Adrenal gland (tissue), 19 donors: ENCODE measurements at regions of chr15 and their contacts with region 1.

Region 1: DNA sequence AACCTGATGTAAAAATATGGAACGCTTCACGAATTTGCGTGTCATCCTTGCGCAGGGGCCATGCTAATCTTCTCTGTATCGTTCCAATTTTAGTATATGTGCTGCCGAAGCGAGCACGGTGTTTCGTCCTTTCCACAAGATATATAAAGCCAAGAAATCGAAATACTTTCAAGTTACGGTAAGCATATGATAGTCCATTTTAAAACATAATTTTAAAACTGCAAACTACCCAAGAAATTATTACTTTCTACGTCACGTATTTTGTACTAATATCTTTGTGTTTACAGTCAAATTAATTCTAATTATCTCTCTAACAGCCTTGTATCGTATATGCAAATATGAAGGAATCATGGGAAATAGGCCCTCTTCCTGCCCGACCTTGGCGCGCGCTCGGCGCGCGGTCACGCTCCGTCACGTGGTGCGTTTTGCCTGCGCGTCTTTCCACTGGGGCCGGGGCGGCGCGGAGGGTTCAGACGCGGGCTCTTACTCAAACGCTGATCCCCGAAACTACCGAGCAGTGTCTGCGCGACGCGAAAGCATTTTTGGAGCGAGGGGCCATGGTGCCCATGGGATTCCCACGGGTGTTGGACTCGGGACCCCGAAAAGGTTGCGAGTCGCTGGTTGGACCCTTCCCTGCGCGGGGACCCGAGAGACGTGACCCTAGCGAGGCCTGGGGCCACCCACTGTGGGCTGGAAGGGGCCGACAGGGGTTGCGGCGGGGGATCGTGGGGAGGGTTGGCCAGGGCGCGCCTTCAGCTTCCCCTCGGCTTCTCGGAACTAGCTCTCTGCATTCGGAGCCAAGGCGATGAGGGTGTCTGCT is at the start of gene RNU6-1:
- DNase-seq: peak; percentile 92 to 98 (median 95)
- H3K4me3 ChIP-seq: peak within 1 kb of the TSS; percentile 46 to 89 (median 61)
- H3K27ac ChIP-seq: peak within 1 kb of the TSS; percentile 95 to 99 (median 96)
- H3K4me1 ChIP-seq: peaks cover 0 to 35% of the 10 kb centered on the region in 2 donors
- H3K27me3 ChIP-seq: peaks cover 5% of the 10 kb centered on the region
- CTCF ChIP-seq: no peak
- POLR2A ChIP-seq: peak; percentile 78 to 91
- total RNA-seq, gene RNU6-1: not detected

Region 2: GRCh38 chr15:66946578-66947164 is 893.5 kb before region 1 on chr15:
- intact Hi-C with region 1: loop called in 1 of 2 experiments (anchors 10 kb)
- DNase-seq: peak; percentile 49 to 87 (median 65)
- H3K4me3 ChIP-seq: no peak overlapping the region
- H3K27ac ChIP-seq: no peak overlapping the region
- H3K4me1 ChIP-seq: no peaks in the 10 kb centered on the region
- H3K27me3 ChIP-seq: no peaks in the 10 kb centered on the region
- CTCF ChIP-seq: peak; percentile 88 to 96 (median 94)
- POLR2A ChIP-seq: no peak

Region 3: DNA sequence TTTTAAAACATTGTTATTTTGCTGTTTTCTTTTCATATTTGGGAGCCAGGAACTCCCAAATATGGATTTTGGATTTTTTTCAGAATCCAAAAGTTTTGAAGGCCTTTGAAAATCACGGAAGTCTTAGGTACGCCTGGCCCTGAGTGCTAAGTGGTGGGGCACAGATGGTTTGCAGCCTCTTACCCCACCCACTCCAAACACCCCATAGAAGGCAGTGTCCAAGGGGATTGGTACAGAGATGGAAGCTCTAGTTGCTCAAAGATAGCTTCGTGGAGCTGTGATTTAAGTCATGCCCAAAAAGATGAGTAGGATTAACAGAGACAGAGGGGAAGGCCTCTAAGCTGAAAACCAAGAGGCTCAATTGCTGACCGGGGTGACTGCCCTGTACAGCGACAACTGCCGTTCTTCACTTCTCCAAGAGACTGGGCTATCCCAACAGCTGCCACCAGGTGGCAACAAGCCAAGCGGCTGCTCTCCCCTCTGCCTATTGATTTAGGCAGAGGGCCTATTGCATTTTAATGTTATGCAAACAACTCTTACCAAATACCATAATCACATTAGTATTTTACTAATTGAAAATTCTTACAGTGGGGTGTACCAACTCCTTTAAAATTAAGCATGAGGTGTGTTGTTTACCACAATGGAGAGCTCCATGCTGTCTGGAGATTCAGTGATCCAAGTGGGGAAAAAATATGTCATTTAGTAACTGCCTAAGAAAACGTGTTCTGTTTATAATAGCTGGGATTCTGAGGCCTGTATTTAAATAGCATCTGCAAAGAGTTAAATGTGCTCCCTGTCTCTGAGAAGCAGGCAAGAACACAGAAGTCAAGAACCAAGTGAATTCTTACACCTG is 383.2 kb before region 1 on chr15:
- intact Hi-C with region 1: loop called in 1 of 2 experiments (anchors 5 kb)
- DNase-seq: peak; percentile 80 to 93 (median 88)
- H3K4me3 ChIP-seq: no peak overlapping the region
- H3K27ac ChIP-seq: no peak overlapping the region
- H3K4me1 ChIP-seq: no peaks in the 10 kb centered on the region
- H3K27me3 ChIP-seq: no peaks in the 10 kb centered on the region
- CTCF ChIP-seq: peak; percentile 62 to 91 (median 82)
- POLR2A ChIP-seq: no peak

Region 4: GRCh38 chr15:67510597-67511225 is 329.4 kb before region 1 on chr15:
- intact Hi-C with region 1: loop called in 1 of 2 experiments (anchors 10 kb)
- DNase-seq: no peak
- H3K4me3 ChIP-seq: no peak overlapping the region
- H3K27ac ChIP-seq: no peak overlapping the region
- H3K4me1 ChIP-seq: peaks cover 0 to 6% of the 10 kb centered on the region in 2 donors
- H3K27me3 ChIP-seq: no peaks in the 10 kb centered on the region
- CTCF ChIP-seq: no peak
- POLR2A ChIP-seq: no peak

Region 5: DNA sequence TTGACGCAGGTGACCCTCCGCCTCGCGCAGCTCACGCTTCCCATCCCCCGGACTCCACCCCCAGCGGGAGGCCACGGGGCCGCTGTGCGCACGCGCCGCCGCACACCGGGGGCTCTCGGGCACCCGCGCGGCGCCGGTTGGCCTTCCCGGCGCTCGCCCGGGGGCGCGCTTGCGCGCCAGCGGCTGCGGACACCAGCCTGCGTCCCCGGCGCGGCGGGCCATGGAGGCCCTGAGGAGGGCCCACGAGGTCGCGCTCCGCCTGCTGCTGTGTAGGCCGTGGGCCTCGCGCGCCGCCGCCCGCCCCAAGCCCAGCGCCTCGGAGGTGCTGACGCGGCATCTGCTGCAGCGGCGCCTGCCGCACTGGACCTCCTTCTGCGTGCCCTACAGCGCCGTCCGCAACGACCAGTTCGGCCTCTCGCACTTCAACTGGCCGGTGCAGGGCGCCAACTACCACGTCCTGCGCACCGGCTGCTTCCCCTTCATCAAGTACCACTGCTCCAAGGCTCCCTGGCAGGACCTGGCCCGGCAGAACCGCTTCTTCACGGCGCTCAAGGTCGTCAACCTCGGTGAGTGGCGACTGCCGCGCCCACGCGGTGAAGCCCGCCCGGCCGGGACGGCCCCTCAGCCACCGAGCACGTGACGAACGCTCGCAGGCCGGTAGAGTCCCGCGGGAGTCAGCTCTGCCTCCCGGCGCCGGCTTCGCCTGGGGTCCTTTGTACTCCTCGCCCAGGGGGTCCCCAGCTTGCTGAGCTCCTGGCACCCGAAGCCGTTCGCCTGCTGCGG is 318.9 kb before region 1 on chr15 and contains the start of gene C15orf61:
- intact Hi-C with region 1: loop called (anchors 10 kb)
- DNase-seq: peak; percentile 81 to 93 (median 85)
- H3K4me3 ChIP-seq: peak within 1 kb of the TSS; percentile 52 to 97 (median 66)
- H3K27ac ChIP-seq: peak within 1 kb of the TSS; percentile 80 to 98 (median 96)
- H3K4me1 ChIP-seq: peaks cover 0 to 21% of the 10 kb centered on the region in 2 donors
- H3K27me3 ChIP-seq: no peaks in the 10 kb centered on the region
- CTCF ChIP-seq: peak in 1 of 6 experiments; percentile 11
- POLR2A ChIP-seq: peak; percentile 82 to 87
- total RNA-seq, gene C15orf61: 1.2 to 8.3 (median 5.1) TPM